Left ventricle myocardium superior (tissue), 1 donor: ENCODE measurements at regions of chr3 and their contacts with region 1.

Region 1: GRCh38 chr3:8441969-8442559 is 59.6 kb upstream of the LMCD1 start:
- DNase-seq: no peak
- ATAC-seq: peak; percentile 57

Region 2: GRCh38 chr3:8482960-8483665 is 41.0 kb after region 1 on chr3:
- intact Hi-C with region 1: loop called (anchors 5 kb)
- DNase-seq: peak; percentile 53
- ATAC-seq: peak; percentile 94

Region 3: DNA sequence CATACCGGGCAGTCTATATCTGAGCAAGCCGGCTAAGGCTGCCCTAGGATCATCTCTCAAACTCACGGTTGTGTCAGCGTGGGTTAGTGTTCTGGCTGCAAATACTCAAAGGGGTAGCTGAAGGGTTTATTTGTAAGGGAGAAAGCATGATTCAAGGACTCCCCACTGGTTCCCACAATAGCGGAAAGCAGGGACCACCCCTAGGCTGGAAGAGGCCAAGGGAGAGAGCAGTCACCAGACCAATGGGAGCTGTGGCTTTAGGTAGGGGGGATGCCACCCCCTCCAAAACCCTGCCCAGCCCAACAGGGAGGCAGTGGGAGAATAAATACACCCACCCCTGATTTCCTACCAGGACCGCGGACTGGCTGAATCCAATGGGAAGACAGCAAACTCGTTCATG is 52.3 kb after region 1 on chr3:
- intact Hi-C with region 1: no loop called
- DNase-seq: no peak
- ATAC-seq: no peak

Region 4: GRCh38 chr3:8607234-8608040 is 165.4 kb after region 1 on chr3:
- intact Hi-C with region 1: loop called (anchors 5 kb)
- DNase-seq: peak; percentile 79
- ATAC-seq: peak; percentile 97

Region 5: DNA sequence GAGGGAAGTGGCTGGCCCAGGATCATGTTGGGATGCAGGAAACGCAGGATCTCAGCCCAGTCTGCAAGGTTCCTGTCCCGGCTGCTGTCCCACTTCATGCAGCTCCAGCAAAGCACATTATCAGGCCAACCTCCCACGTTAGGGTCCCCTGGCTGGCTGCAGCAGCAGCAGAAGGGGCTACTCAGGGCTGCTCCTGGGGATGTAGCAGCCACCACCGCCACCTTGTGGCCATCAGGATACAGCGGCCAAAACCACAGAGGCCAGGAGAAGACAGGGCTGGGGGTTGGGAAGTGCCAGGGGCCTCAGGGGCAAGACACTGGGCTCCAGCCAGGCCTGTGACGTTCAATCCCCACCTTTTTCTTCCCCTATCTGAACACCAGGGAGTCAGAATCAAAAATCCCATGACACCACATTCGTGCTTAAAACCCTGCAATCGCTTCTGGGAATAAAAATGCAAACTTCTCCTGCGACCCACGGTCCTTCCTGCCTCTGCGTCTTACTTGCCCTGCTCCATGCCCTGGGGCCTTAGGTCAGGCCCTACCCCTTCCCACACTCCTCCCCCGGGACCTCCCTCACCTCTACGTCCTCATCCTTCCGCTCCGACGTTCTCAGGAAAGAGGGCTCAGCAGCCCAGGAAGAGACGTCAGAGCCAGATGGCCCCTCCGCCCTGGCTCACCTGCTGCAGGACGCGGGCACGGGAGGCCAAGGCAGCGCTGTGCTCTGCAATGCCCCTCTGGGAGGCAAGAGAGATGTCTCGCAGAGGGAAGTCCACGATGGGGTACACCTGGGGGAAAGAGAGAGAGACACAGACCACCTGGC is 181.0 kb after region 1 on chr3:
- intact Hi-C with region 1: loop called (anchors 5 kb)
- DNase-seq: peak; percentile 82
- ATAC-seq: peak; percentile 90

Region 6: GRCh38 chr3:8638994-8639658 is 197.1 kb after region 1 on chr3:
- intact Hi-C with region 1: no loop called
- DNase-seq: no peak
- ATAC-seq: peak; percentile 47